Activated CD4-positive, alpha-beta memory T cell treated with anti-CD3 and anti-CD28 coated beads for 36 hours (primary cell): ENCODE measurements at regions of chr19 and their contacts with region 1.

Region 1: DNA sequence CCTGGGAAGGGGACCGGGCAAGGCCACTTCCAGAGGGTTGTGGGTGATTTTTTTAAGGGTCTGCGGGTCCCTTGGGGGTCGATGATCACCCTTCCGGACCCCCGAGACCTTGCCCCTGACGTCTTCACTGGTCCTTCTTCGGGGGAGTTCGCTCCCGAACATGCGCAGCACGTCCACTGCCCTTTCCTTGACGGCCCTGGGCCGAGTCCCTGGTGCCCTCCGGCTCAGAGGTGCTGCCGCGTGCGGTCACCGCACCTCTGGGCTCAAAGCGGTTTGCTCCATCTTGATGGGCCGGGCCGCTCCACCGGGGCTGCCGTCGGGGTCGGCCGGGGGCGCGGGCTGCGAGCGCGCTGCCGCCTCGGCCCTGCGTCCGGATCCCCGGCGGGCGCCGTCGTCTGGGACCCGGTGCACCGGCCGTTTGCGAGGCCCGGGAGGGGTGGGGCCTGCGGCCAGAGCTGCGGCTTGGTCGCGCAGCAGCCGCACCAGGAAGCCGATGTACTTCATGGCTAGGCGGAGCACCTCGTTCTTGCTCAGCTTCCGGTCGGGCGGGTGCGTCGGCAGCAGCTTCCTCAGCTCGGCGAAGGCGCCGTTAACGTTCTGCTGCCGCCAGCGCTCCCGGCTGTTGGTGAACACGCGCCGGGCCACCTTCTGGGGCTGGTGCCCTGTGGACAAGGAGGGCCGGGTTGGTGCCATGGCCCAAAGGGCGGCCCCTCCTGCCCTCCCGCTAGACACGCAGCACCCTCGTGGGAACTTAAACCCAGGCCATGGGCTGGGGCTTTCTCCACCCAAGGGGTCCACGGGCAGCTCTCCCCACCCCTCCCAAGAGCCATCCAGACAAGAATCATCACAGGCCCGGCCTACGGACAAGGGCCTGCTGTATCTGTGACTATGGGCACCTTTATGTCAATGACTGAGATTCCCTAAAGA is 3.3 kb downstream of the LYL1 start:
- DNase-seq: peak; percentile 88
- H3K4me3 Mint-ChIP-seq: peak overlapping the region; percentile 64
- H3K27ac Mint-ChIP-seq: peak overlapping the region; percentile 90
- H3K4me1 Mint-ChIP-seq: peaks cover 58% of the 10 kb centered on the region
- H3K27me3 Mint-ChIP-seq: peaks cover 22% of the 10 kb centered on the region

Region 2: DNA sequence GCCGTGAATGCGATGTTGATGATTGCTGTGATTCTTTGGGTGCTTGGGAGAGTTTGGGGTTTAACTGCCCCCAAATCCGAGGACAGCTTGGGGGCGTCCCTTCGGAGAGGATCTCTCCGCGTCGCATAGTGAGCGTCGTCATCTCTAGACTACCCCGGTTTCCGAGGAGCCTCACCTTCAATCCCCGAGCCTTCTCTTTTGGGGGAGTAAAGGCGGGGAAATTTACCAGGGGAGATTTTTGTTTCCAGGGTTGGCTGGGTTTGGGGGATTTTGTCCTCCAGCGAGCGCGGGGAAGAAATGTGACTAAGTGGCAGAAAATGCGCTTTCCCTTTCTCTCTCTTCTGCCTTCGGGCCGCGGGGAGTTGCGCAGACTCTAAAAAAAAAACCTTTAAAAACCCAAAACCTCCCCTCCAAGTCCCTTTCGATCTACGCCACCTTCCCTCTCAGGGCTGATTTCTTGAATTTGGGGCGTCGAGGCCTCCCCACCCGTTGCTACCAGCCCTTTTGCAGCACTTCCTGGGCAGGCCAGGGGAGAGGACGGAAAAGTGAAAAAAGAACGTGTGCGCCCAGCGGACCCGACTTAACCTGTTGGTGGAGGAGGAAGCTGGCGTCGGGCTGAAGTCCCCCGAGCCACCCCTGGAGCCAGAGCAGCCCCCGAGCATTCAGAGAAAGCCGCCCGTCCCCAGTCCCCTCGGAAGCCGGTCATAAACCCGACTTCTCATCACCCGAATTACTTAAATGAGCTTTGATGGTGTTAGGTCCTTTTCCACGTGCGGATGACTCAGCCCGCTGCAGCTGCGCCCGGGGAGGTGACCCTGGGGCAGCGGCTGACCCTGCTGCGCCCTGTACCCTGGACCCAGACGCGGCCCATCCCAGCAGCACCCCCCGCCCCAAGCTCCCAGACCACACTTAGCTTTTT is 86.4 kb before region 1 on chr19:
- CTCF ChIA-PET with region 1: interaction called, 15 read pairs
- POLR2A ChIA-PET with region 1: interaction called, 5 read pairs
- intact Hi-C with region 1: loop called (anchors 2 kb)
- DNase-seq: peak; percentile 59
- H3K4me3 Mint-ChIP-seq: peak overlapping the region; percentile 79
- H3K27ac Mint-ChIP-seq: peak overlapping the region; percentile 66
- H3K4me1 Mint-ChIP-seq: peaks cover 21% of the 10 kb centered on the region
- H3K27me3 Mint-ChIP-seq: peaks cover 58% of the 10 kb centered on the region